Calu3 (cell line): ENCODE measurements at regions of chr11 and their contacts with region 1.

Region 1: DNA sequence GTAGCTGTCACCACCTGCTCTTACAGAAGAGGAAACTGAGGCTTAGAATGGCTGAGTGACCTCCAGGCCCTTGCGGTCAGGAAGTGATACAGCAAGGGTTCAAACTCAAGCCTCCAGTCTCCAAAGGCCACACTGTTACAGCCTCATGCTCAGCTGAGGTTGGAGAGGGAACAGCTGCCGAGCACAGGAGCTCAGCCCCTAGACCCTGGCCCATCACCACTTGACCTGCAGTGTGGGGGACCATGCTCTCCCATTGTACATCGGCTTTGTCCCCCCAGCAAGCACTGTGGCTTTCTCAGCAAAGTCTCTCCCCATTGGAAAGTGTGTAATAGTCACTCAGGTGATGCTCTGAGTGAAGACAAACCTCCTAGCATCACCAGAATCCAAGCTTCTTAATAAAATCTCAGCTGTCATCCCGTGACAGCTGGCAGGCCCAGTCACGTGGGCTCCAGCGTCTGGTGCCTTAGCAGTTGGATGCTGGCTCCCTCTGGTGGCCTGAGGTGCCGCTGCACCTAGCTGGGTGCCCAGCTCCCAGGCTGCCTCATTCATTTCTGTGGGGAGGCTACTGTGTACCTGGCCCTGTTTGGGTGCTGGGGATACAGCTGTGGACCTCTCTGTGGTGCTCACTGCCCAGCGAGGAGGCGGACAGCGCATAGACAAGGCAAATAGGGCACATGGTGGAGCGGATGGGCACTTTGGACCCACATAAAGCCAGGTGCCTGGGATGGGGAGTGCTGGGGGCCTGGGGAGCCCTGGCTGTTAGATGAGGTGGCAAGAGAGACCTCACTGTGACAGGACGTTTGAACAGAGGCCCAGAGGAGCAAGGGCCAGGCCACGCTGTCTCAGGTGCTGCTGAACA is 19.1 kb upstream of the MYRF start:
- DNase-seq: peak; percentile 87
- H3K4me3 Mint-ChIP-seq: no peak overlapping the region
- H3K27ac Mint-ChIP-seq: peak overlapping the region; percentile 78
- H3K4me1 Mint-ChIP-seq: peaks cover 33% of the 10 kb centered on the region
- H3K27me3 Mint-ChIP-seq: no peaks in the 10 kb centered on the region
- CTCF ChIP-seq: peak; percentile 94

Region 2: DNA sequence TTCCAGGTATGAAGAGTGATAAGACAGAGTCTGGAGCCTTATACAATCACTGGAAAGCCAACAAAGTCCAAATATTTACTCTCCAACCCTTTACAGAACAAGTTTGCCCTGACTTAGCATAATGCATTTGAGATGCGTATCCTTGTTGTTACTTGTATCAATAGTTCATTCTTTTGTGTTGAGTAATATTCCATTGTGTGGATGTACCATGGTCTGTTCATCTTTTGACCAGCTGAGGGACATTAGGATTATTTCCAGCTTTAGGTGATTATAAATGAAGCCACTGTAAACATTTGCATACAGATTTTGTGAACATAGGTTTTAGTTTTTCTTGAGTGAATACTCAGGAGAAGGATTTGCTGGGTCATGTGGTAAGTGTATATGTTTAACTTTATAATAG is 293.7 kb before region 1 on chr11:
- CTCF ChIA-PET with region 1: no interaction called
- intact Hi-C with region 1: no loop called
- DNase-seq: no peak
- H3K4me3 Mint-ChIP-seq: no peak overlapping the region
- H3K27ac Mint-ChIP-seq: no peak overlapping the region
- H3K4me1 Mint-ChIP-seq: peaks cover 8% of the 10 kb centered on the region
- H3K27me3 Mint-ChIP-seq: no peaks in the 10 kb centered on the region
- CTCF ChIP-seq: no peak

Region 3: GRCh38 chr11:61639816-61640443 is 93.4 kb before region 1 on chr11:
- CTCF ChIA-PET with region 1: interaction called, 15 read pairs
- intact Hi-C with region 1: no loop called
- DNase-seq: no peak
- H3K4me3 Mint-ChIP-seq: no peak overlapping the region
- H3K27ac Mint-ChIP-seq: no peak overlapping the region
- H3K4me1 Mint-ChIP-seq: no peaks in the 10 kb centered on the region
- H3K27me3 Mint-ChIP-seq: peaks cover 35% of the 10 kb centered on the region
- CTCF ChIP-seq: no peak

Region 4: GRCh38 chr11:61657566-61657965 is 75.8 kb before region 1 on chr11:
- CTCF ChIA-PET with region 1: interaction called, 3 read pairs
- intact Hi-C with region 1: loop called (anchors 5 kb)
- DNase-seq: peak; percentile 56
- H3K4me3 Mint-ChIP-seq: no peak overlapping the region
- H3K27ac Mint-ChIP-seq: no peak overlapping the region
- H3K4me1 Mint-ChIP-seq: peaks cover 39% of the 10 kb centered on the region
- H3K27me3 Mint-ChIP-seq: no peaks in the 10 kb centered on the region
- CTCF ChIP-seq: no peak

Region 5: DNA sequence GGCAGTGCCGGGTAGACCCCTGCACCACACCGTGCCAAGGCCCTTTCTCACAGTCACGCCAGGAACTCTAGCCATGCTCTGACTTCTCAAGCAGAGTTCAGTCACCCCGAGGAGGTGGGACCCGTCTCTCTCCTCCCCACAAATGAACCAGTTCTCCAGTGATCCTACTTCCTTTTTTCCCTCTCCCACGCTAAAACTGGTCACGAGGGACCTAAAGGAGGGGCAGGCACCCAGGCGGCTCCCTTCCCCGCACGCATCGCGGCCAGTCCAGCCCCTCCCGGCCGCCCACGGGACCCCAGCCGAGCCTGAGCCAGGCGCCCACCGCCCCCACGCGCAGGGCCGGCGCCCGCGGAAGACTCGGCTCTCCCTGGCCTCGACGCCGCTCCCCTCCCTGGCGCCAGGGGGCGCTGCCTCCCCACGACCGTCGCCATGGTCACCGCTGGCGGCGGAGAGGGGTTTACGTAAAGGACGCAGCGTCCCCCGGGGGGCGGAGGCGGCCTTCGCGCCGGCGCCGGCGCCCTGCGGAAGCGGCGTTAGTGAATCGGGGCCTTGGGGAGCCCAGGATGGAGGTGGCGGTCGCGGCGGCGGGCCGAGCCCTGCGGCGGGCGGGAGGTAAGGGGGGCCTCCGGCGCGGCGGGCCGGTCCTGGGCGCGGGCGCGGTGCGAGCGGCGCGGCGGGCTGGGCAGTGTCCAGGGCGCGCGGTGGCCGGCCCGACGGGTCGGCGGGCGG is 53.3 kb before region 1 on chr11 and contains the start of gene DAGLA:
- CTCF ChIA-PET with region 1: interaction called, 11 read pairs
- intact Hi-C with region 1: loop called (anchors 1 kb)
- DNase-seq: peak; percentile 83
- H3K4me3 Mint-ChIP-seq: no peak within 1 kb of the TSS
- H3K27ac Mint-ChIP-seq: peak within 1 kb of the TSS; percentile 57
- H3K4me1 Mint-ChIP-seq: peaks cover 8% of the 10 kb centered on the region
- H3K27me3 Mint-ChIP-seq: peaks cover 46% of the 10 kb centered on the region
- CTCF ChIP-seq: peak; percentile 95
- total RNA-seq, gene DAGLA: 7.5 and 9.0 TPM in 2 replicates

Region 6: DNA sequence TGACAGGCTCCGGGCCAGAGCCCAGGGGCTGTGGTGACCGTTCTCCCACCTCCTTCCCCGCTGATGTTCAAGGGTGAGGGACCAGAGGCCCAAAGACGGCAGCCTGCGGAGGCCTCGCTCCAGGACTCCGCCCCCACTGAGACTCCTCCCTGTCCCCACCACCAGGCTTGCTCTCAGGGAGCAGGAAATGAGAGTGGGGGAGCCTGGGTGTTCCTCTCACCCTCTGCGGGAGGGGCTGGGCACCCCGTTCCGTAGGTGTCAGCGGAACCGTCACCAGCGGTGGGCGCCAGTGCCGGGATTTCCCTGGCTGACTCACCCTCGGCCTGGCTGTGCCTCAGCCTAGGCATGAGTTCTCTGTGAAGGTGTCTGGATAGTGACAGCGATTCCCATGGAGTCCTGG is 37.4 kb before region 1 on chr11:
- CTCF ChIA-PET with region 1: interaction called, 12 read pairs
- intact Hi-C with region 1: loop called (anchors 2 kb)
- DNase-seq: peak; percentile 92
- H3K4me3 Mint-ChIP-seq: peak overlapping the region; percentile 49
- H3K27ac Mint-ChIP-seq: peak overlapping the region; percentile 87
- H3K4me1 Mint-ChIP-seq: peaks cover 42% of the 10 kb centered on the region
- H3K27me3 Mint-ChIP-seq: no peaks in the 10 kb centered on the region
- CTCF ChIP-seq: no peak

Region 7: GRCh38 chr11:61747192-61747966 is 14.0 kb after region 1 on chr11:
- CTCF ChIA-PET with region 1: interaction called, 10 read pairs
- intact Hi-C with region 1: no loop called
- DNase-seq: peak; percentile 91
- H3K4me3 Mint-ChIP-seq: no peak overlapping the region
- H3K27ac Mint-ChIP-seq: no peak overlapping the region
- H3K4me1 Mint-ChIP-seq: peaks cover 16% of the 10 kb centered on the region
- H3K27me3 Mint-ChIP-seq: no peaks in the 10 kb centered on the region
- CTCF ChIP-seq: peak; percentile 90